ENCODE measurements at regions of chr22 and their contacts with region 1.

Region 1: DNA sequence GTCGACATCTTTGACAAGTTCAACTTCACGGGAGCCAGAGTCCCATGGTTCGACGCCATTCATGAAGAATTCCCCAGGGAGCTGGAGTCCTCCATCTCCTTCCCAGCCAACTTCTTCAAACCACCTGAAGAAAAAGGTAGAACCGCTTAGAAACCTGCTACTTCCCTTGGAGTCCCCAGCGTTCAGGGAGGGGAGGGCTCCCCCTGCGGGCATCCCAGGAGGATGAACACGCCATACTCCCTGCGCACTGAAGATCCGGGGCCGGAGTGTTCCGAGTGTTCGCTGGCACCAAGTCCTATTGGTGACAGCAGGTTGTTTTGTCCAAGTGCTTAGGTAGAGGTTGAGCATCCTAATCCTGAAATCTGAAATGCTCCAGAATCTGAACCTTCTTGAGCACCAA is 51.7 kb upstream of the PRODH start:
- DNase-seq: peak in 3 of 10 donors; percentile 8 to 43 (median 10)
- H3K4me3 ChIP-seq: no peak overlapping the region
- H3K27ac ChIP-seq: no peak overlapping the region
- H3K27me3 ChIP-seq: no peaks in the 10 kb centered on the region
- CTCF ChIP-seq: peak in 8 of 56 donors; percentile 8 to 42 (median 18)

Region 2: GRCh38 chr22:18970176-18970947 is 17.4 kb before region 1 on chr22:
- intact Hi-C with region 1: loop called in 1 of 2 experiments (anchors 2 kb)
- DNase-seq: peak in 1 of 10 donors; percentile 49
- H3K4me3 ChIP-seq: peak overlapping the region; percentile 29 to 84 (median 67)
- H3K27ac ChIP-seq: peak overlapping the region in 48 of 59 donors; percentile 15 to 89 (median 70)
- H3K27me3 ChIP-seq: peaks cover 0 to 9% (median 0%) of the 10 kb centered on the region in 45 donors
- CTCF ChIP-seq: no peak